Activated CD8-positive, alpha-beta T cell treated with anti-CD3 and anti-CD28 coated beads, Interleukin-2, amount 10 ng/mL, durations not matched to agents 7 days and 5 days (primary cell): ENCODE measurements at regions of chr17 and their contacts with region 1.

Region 1: DNA sequence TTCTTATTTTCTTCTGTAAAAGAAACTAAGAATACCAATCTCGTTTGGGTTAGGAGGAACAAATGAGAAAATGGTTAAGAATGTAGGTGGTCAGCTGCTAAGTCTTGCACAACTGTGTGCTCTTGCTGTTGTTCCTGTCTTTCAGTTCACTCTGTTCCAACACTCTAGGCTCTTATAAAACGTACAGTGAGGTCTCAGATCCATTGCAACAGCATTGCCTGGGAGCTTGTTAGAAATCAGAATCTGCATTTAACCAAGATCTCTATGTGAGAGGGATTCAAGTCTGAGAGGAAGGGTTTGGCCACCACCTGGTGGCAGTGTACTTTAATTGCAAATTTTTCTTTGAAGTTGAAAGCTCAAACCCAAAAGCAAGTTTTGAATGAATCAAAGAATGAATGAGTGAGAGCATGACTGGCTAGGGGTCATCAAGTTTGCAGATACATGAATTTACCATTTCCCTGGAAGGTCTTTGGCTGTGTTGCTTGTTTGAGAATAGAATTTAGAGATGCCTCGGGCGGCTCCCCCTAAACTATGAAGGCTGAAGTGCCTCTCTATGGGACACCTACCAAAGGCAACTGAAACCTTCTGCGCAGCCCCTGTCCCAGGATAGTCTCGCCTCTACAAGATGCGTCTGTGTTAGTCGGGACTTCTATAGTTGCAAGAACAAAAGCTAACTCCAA is 2.5 kb downstream of the ALOX15B start:
- DNase-seq: peak; percentile 69
- ATAC-seq: no peak
- H3K4me3 Mint-ChIP-seq: no peak overlapping the region
- H3K27ac Mint-ChIP-seq: no peak overlapping the region
- H3K4me1 Mint-ChIP-seq: peaks cover 3% of the 10 kb centered on the region
- H3K27me3 Mint-ChIP-seq: peaks cover 35% of the 10 kb centered on the region

Region 2: GRCh38 chr17:7825206-7825990 is 216.0 kb before region 1 on chr17:
- CTCF ChIA-PET with region 1: interaction called, 11 read pairs
- POLR2A ChIA-PET with region 1: no interaction called
- DNase-seq: no peak
- ATAC-seq: no peak
- H3K4me3 Mint-ChIP-seq: no peak overlapping the region
- H3K27ac Mint-ChIP-seq: no peak overlapping the region
- H3K4me1 Mint-ChIP-seq: no peaks in the 10 kb centered on the region
- H3K27me3 Mint-ChIP-seq: peaks cover 18% of the 10 kb centered on the region

Region 3: GRCh38 chr17:7915611-7916382 is 125.6 kb before region 1 on chr17 and contains the start of gene RNF227:
- CTCF ChIA-PET with region 1: interaction called, 14 read pairs
- POLR2A ChIA-PET with region 1: no interaction called
- DNase-seq: peak; percentile 89
- ATAC-seq: peak; percentile 85
- H3K4me3 Mint-ChIP-seq: peak within 1 kb of the TSS; percentile 85
- H3K27ac Mint-ChIP-seq: peak within 1 kb of the TSS; percentile 95
- H3K4me1 Mint-ChIP-seq: peaks cover 35% of the 10 kb centered on the region
- H3K27me3 Mint-ChIP-seq: no peaks in the 10 kb centered on the region
- total RNA-seq, gene RNF227: 4.2 TPM

Region 4: DNA sequence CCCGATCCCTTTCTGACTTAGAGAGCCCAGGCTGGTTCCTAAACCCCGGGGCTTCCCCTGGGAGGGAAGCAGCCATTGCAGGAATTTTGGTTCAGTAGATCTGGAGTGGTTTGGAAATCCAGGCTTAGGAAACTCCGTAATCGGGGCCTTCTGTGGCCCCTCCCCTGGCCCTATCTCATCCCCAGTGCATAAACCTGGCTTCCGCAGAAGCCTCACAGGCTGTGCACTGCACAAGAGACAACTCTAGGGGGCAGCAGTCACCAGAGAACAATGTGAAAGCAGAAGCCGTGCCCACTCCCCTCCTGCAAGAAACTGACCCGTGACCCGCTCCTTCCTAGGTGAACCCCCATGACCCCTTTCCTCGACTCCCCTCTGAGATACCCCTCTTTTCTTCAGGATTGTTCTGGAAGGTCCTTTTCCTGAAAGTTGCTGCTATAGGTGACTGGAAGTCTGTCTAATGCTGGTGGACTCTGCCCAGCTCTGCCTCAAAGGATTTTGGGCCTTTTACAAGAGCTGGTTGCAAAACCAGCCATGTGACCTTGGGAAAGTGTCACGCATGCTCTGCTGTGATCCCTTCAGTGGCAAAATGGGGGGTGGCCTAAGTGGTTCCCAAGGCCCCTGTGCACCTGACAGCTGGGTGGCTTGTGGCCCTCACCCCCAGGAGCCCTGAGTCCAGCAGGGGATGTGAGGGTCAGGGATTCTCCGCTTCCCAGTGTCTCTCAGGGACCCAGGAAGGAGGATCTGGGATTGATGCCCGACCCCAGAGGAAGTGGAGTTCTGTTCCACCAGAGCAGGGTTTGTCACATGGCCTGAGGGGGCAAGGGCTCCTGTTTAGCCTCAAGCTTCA is 24.5 kb before region 1 on chr17:
- CTCF ChIA-PET with region 1: interaction called, 57 read pairs
- POLR2A ChIA-PET with region 1: interaction called, 5 read pairs
- DNase-seq: peak; percentile 73
- ATAC-seq: peak; percentile 81
- H3K4me3 Mint-ChIP-seq: peak overlapping the region; percentile 69
- H3K27ac Mint-ChIP-seq: no peak overlapping the region
- H3K4me1 Mint-ChIP-seq: peaks cover 18% of the 10 kb centered on the region
- H3K27me3 Mint-ChIP-seq: peaks cover 39% of the 10 kb centered on the region

Region 5: GRCh38 chr17:8031261-8031661 is 10.1 kb before region 1 on chr17:
- CTCF ChIA-PET with region 1: interaction called, 18 read pairs
- POLR2A ChIA-PET with region 1: interaction called, 3 read pairs
- DNase-seq: no peak
- ATAC-seq: no peak
- H3K4me3 Mint-ChIP-seq: no peak overlapping the region
- H3K27ac Mint-ChIP-seq: no peak overlapping the region
- H3K4me1 Mint-ChIP-seq: no peaks in the 10 kb centered on the region
- H3K27me3 Mint-ChIP-seq: peaks cover 43% of the 10 kb centered on the region